Endothelial cell of umbilical vein (primary cell): ENCODE measurements at regions of chr6 and their contacts with region 1.

Region 1: GRCh38 chr6:18527836-18528743 is 140.9 kb downstream of the RNF144B start:
- DNase-seq: peak; percentile 24
- H3K4me3 ChIP-seq: no peak overlapping the region
- H3K27ac ChIP-seq: no peak overlapping the region
- H3K4me1 ChIP-seq: peaks cover 2% of the 10 kb centered on the region
- H3K27me3 ChIP-seq: peaks cover 1 to 19% of the 10 kb centered on the region in 2 experiments
- CTCF ChIP-seq: no peak
- POLR2A ChIP-seq: no peak

Region 2: DNA sequence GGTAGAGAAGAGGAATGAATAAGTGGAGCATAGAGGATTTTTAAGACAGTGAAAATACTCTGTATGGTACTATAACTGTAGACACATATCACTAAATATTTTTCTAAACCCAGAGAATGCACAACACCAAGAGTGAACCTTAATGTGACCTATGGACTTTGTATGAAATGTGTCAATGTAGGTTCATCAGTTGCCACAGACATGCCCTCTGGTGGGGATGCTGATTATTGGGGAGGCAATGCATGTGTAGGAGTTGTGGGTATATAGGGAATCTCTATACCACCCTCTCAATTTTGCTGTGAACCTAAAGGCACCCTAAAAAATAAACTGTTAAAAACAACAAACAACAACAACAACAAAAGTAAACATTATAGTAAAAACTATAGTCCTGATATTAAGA is 152.8 kb after region 1 on chr6:
- CTCF ChIA-PET with region 1: interaction called, 5 read pairs
- POLR2A ChIA-PET with region 1: no interaction called
- dilution Hi-C with region 1: no loop called
- intact Hi-C with region 1: loop called (anchors 2 kb)
- DNase-seq: no peak
- H3K4me3 ChIP-seq: no peak overlapping the region
- H3K27ac ChIP-seq: no peak overlapping the region
- H3K4me1 ChIP-seq: no peaks in the 10 kb centered on the region
- H3K27me3 ChIP-seq: no peaks in the 10 kb centered on the region
- CTCF ChIP-seq: no peak
- POLR2A ChIP-seq: no peak

Region 3: DNA sequence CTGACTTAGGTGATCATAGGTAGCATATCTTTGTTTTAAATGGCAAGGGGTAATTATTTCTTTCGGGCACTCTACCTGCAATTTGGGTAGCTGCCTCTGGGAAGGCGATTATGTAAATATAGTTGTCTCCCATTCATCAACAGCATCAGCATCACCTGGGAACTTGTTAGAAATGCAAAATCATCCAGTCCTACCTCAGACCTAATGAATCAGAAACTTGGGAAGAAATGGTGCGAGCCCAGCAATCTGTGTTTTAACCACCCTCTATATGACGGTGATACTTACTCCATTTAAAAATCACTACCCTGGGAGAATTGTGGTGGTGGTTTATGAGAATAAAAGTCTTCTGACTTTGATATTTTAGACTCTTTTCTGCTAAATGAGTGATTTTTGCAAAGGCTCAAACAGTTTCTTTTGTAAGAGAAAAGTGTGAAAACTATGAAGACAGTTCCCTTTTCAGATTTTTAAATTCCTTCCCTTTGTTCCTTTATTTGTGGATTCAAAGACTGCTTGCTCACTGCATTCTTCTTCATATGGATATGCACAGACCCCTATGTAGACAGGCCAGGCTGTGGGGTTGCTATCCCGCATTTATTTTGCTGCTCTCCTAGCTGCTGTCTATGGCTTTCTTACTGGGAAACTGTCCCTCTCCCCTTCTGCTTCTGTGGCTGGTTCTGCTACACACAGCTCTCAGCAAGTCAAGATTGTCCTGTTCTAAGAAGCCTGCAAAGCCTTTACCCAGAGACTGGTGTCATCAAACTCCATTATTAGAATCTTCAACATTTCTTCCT is 224.4 kb after region 1 on chr6:
- CTCF ChIA-PET with region 1: interaction called, 10 read pairs
- POLR2A ChIA-PET with region 1: no interaction called
- dilution Hi-C with region 1: no loop called
- intact Hi-C with region 1: loop called (anchors 1 kb)
- DNase-seq: no peak
- H3K4me3 ChIP-seq: no peak overlapping the region
- H3K27ac ChIP-seq: no peak overlapping the region
- H3K4me1 ChIP-seq: no peaks in the 10 kb centered on the region
- H3K27me3 ChIP-seq: no peaks in the 10 kb centered on the region
- CTCF ChIP-seq: no peak
- POLR2A ChIP-seq: no peak

Region 4: GRCh38 chr6:20056350-20056992 is 1528.4 kb after region 1 on chr6:
- CTCF ChIA-PET with region 1: interaction called, 87 read pairs
- POLR2A ChIA-PET with region 1: no interaction called
- dilution Hi-C with region 1: no loop called
- intact Hi-C with region 1: loop called (anchors 5 kb)
- DNase-seq: peak; percentile 44
- H3K4me3 ChIP-seq: no peak overlapping the region
- H3K27ac ChIP-seq: no peak overlapping the region
- H3K4me1 ChIP-seq: no peaks in the 10 kb centered on the region
- H3K27me3 ChIP-seq: no peaks in the 10 kb centered on the region
- CTCF ChIP-seq: peak; percentile 19 to 26
- POLR2A ChIP-seq: no peak